GM10248 (cell line): ENCODE measurements at regions of chr1 and their contacts with region 1.

Region 1: DNA sequence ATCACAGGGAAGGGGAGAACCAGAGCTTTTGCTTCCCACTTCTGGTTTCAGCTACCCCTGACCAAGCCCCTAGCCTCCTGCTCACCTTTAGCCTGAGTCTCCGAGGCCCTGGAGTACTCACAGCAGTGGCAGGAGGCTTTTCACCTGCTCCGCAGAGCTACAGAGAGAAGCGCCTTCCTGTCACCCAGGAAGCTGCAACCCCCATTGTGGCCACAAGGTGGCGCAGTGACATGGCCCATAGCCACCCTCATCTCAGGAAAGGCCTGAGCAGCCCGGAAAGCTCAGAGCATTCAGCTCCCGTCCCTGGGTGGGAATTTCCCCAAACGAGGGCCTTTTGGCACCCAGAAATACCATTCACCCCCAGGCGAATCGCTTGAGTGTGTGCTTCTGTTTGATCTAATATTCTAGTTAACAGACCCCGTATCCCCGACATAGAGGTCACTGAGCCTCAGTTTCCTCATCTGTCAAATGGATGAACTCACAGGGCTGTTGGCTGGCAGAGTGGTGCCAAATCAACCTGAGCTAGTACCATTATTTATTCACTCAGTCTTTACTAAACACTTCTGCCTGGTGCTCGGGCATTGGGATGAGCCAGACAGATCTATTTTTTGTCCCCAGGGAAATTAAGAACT is 25.3 kb downstream of the A3GALT2 start:
- DNase-seq: peak; percentile 90
- CTCF ChIP-seq: peak; percentile 90

Region 2: DNA sequence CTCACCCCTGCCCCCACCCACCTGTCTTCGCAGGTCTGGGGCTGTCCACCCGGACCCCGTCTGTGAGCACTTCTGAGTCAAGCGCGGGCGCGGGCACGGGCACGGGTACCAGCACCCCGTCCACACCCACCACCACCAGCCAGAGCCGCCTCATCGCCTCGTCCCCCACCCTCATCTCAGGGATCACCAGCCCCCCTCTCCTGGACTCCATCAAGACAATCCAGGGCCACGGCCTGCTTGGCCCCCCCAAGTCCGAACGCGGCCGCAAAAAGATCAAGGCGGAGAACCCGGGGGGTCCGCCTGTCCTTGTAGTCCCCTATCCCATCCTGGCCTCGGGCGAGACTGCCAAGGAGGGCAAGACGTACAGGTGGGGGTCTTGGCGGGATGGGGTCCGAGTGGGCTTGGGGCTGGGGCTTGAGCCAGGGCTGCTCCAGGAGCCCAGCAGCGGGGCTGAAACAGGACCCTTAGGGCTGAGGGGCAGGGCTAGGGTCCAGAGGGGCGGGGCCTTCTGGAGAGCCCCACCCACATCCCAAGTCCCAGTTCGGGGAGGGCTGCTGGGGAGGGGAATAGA is 15.4 kb before region 1 on chr1:
- CTCF ChIA-PET with region 1: interaction called, 17 read pairs
- POLR2A ChIA-PET with region 1: no interaction called
- DNase-seq: no peak
- CTCF ChIP-seq: no peak

Region 3: GRCh38 chr1:33327587-33328315 is 32.2 kb after region 1 on chr1:
- CTCF ChIA-PET with region 1: interaction called, 17 read pairs
- POLR2A ChIA-PET with region 1: no interaction called
- DNase-seq: no peak
- CTCF ChIP-seq: no peak

Region 4: DNA sequence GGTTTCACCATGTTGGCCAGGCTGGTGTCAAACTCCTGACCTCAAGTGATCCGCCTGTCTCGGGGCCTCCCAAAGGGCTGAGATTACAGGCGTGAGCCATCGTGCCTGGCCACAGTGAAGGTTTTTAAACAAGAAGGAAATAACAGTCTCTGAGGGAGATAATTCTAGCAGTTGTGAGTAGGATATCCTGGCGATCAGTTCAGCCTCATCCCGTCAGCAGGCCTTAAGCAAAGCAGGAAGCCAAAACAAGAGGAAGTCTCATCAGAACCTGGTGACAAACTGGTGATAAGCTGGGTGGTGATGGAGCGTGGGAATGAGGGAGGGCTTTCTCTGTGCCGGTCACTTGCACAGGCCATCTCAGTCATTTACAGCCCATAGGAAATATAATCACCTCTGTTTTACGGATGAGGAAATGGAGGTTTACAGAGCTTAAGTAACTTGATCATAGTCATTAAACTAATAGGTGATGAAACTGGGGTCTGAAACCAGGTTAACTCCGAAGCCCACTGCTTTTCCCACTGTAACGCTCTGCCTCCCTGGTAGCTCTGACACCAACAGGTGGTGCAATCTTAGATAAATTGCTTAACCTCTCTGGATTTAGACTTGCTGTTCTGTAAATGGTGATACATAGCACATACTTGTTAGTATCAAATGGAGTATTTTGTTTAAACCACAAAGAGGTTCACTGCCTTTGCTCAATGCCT is 66.1 kb after region 1 on chr1:
- CTCF ChIA-PET with region 1: interaction called, 28 read pairs
- POLR2A ChIA-PET with region 1: no interaction called
- DNase-seq: no peak
- CTCF ChIP-seq: no peak

Region 5: GRCh38 chr1:33472349-33472980 is 176.9 kb after region 1 on chr1 and contains the start of gene ZSCAN20:
- CTCF ChIA-PET with region 1: interaction called, 158 read pairs
- POLR2A ChIA-PET with region 1: no interaction called
- DNase-seq: peak; percentile 91
- CTCF ChIP-seq: no peak